Calu3 (cell line): ENCODE measurements at regions of chr2 and their contacts with region 1.

Region 1: DNA sequence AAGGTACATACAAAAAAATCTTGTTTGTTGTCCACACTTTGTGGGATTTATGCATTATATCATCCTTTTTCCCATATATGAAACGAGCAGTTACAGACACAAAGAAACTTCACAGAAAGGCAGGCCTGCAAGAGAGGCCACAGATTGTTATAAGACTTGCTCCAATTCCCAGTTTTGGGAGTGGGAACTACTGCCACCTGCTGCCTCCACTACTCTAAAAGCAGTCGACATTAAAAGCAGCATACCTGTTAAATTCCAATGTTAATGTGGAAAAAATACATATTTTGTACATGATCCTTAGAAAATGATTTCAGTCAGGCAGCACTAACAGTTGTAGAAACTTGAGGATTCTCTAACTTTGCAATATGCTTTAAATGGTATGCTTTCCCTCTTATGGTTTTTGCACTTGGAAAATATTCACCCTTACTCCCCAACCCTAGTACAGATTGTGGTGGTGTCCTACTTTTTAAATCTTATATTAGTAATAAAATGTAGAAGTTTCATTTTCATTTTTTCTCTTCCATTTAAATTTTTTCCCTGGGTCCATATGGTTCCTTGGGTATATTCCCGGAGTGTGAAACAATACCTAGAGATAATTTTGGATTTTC is 37.9 kb downstream of the SLC38A11 start:
- DNase-seq: peak; percentile 62
- H3K4me3 Mint-ChIP-seq: no peak overlapping the region
- H3K27ac Mint-ChIP-seq: no peak overlapping the region
- H3K4me1 Mint-ChIP-seq: peaks cover 32% of the 10 kb centered on the region
- H3K27me3 Mint-ChIP-seq: no peaks in the 10 kb centered on the region
- CTCF ChIP-seq: peak; percentile 49

Region 2: DNA sequence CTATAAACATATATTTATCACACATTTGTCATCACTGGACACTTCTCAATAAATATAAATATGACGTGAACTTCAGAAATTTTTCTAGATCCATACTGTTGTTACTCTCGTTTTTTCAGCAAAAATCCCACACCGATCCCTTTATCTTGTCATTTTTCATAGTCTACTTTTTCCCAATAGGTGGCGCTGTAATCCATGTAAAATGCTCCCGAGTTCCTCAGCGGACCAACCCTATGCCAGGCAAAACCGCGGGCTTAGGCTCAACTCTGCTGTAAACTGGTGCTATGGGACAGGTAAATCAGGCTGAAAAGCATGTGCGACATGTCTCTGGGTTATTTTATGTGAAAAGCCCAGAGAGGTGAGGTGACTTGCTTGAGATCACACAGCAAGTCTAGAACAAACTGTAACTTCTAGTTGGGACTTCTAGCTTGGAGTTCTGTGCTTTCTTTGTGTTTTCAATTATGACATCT is 179.8 kb before region 1 on chr2:
- CTCF ChIA-PET with region 1: interaction called, 8 read pairs
- intact Hi-C with region 1: loop called (anchors 1 kb)
- DNase-seq: peak; percentile 63
- H3K4me3 Mint-ChIP-seq: no peak overlapping the region
- H3K27ac Mint-ChIP-seq: peak overlapping the region; percentile 26
- H3K4me1 Mint-ChIP-seq: peaks cover 68% of the 10 kb centered on the region
- H3K27me3 Mint-ChIP-seq: no peaks in the 10 kb centered on the region
- CTCF ChIP-seq: peak; percentile 77